MCF 10A (cell line): ENCODE measurements at regions of chr21 and their contacts with region 1.

Region 1: DNA sequence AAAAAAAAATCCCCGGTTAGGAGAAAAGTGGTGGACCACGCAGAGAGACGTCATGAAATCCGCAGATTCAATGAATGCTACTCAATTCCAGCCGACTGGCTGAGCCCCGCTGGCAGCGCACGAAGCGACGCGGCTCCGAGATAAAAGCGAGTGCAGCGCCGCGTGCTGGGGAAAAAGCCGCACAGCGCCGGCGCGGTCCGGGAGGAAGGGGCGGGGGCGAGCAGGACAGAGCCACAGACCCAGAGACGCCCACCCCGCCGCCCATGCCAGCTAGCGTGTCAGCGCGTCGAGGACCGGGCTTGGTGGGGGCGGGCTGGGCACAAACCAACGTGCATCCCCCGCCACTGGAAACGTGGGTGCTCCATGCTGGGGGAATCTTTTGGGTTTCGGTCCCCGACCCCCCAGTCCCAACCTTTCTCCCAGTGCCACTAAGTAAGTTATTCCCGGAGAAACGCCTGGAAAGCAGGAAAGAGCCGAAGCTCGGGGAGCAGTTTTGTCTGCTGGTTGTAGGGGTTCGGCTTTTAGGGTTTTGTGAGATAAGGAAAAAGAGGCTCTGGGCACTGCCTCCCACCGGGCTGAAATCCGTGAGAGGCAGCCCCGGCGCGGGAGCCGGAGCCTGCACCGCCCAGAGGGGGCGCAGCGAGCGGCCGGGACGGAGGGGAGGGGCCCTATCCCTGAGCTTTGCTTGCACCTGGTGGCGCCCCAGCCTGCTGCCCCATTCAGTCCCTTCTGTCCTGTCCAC is at the start of gene KCNJ6:
- DNase-seq: peak; percentile 48
- H3K4me3 Mint-ChIP-seq: peak within 1 kb of the TSS; percentile 70
- H3K27ac Mint-ChIP-seq: no peak within 1 kb of the TSS
- H3K4me1 Mint-ChIP-seq: peaks cover 11% of the 10 kb centered on the region
- H3K27me3 Mint-ChIP-seq: peaks cover 31% of the 10 kb centered on the region
- CTCF ChIP-seq: peak; percentile 84
- total RNA-seq, gene KCNJ6: 0.20 and 0.28 TPM in 2 replicates

Region 2: DNA sequence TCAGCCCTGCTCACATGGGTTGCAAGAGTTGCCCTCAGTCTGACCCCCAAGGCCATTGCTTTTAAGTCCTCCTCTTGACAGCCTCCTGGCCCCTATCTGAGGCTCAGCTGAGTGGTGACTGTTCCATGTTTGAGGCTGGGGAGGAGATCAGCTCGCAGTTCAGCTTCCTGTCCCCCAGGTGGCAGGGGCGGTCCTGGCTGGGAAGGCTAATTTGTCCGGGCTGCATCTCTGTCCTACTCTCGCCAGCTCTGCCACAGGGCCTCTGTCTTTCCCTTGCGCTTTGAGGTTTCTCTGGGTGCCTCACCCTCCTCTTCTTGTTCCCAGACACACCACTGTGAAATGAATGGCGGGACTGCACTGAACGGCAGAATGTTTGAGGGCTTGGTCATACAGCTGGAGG is 157.5 kb before region 1 on chr21:
- CTCF ChIA-PET with region 1: no interaction called
- POLR2A ChIA-PET with region 1: no interaction called
- intact Hi-C with region 1: loop called (anchors 1 kb)
- DNase-seq: peak; percentile 54
- H3K4me3 Mint-ChIP-seq: no peak overlapping the region
- H3K27ac Mint-ChIP-seq: no peak overlapping the region
- H3K4me1 Mint-ChIP-seq: peaks cover 8% of the 10 kb centered on the region
- H3K27me3 Mint-ChIP-seq: peaks cover 21% of the 10 kb centered on the region
- CTCF ChIP-seq: peak; percentile 73

Region 3: GRCh38 chr21:37939251-37939650 is 22.8 kb after region 1 on chr21:
- CTCF ChIA-PET with region 1: no interaction called
- POLR2A ChIA-PET with region 1: no interaction called
- intact Hi-C with region 1: no loop called
- DNase-seq: peak; percentile 35
- H3K4me3 Mint-ChIP-seq: no peak overlapping the region
- H3K27ac Mint-ChIP-seq: no peak overlapping the region
- H3K4me1 Mint-ChIP-seq: peaks cover 7% of the 10 kb centered on the region
- H3K27me3 Mint-ChIP-seq: no peaks in the 10 kb centered on the region
- CTCF ChIP-seq: no peak

Region 4: DNA sequence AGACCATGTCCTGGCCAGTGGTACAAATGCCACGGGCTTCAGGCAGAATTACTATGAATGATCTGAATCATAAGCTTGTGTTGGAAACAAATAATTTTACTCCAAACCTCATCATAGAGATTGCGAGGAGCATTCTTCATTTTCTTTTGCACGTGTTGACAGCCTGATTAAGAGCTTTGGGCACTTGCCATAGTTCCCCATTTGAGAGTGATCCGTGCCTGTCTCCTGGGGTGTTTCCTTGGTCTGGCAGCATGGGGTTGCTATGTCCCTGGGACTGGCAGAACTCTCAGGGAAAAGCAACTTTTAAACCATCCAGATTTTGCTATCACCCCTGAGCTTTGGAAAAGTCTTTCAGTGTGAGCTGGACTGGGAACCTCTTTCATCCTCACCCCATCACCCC is 54.1 kb after region 1 on chr21:
- CTCF ChIA-PET with region 1: no interaction called
- POLR2A ChIA-PET with region 1: no interaction called
- intact Hi-C with region 1: no loop called
- DNase-seq: no peak
- H3K4me3 Mint-ChIP-seq: no peak overlapping the region
- H3K27ac Mint-ChIP-seq: no peak overlapping the region
- H3K4me1 Mint-ChIP-seq: no peaks in the 10 kb centered on the region
- H3K27me3 Mint-ChIP-seq: no peaks in the 10 kb centered on the region
- CTCF ChIP-seq: no peak